HCT116 (cell line): ENCODE measurements at regions of chr4 and their contacts with region 1.

Region 1: DNA sequence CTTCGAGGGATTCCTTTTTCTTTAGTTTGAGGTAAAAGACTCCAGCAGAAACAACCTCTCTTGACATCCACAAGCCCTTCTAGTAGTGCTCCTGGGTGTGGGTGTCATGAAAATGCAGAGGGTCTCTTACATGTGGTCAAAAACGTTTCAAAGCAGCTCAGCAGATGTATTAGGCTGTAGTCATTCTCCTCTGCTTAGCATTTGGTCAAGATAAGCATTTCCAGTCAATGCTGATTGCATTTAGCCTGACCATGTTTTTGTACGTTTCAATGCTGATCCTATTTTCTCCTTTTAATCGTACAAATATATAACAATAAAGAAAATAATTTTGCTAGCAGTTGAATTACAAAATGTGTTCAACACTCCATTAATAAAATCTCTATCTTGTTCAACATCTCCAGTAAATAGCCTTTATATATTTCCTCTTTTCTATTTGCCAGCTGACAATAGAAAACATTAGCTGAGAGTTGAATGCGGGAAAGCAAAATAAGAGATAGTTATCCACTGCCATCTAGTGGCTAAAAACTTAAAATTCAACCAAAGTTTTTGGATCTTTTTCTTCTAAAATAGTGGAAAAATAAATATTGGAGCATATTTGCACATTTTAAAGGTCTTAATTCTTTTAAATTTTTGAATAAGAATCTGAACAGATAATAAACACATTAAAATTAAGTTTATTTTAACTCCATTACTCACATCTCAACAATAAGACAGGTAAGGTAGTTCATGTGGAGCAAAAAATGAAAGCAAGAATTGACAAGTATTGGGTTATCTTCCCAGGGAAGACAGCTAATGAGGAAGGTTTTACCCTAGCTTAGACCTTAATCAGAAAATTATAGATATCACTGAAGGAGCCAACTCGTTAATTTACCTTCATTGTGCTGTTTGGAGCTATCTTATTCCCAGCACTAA is 15.2 kb upstream of the PACRGL start:
- DNase-seq: no peak
- ATAC-seq: no peak
- H3K4me3 ChIP-seq: no peak overlapping the region
- H3K27ac ChIP-seq: no peak overlapping the region
- H3K4me1 ChIP-seq: no peaks in the 10 kb centered on the region
- H3K27me3 ChIP-seq: peaks cover 40% of the 10 kb centered on the region
- CTCF ChIP-seq: peak; percentile 31 to 65 (median 58); a peak in 4 of 6 replicates
- POLR2A ChIP-seq: no peak
- RAD21 ChIP-seq: peak; percentile 70

Region 2: DNA sequence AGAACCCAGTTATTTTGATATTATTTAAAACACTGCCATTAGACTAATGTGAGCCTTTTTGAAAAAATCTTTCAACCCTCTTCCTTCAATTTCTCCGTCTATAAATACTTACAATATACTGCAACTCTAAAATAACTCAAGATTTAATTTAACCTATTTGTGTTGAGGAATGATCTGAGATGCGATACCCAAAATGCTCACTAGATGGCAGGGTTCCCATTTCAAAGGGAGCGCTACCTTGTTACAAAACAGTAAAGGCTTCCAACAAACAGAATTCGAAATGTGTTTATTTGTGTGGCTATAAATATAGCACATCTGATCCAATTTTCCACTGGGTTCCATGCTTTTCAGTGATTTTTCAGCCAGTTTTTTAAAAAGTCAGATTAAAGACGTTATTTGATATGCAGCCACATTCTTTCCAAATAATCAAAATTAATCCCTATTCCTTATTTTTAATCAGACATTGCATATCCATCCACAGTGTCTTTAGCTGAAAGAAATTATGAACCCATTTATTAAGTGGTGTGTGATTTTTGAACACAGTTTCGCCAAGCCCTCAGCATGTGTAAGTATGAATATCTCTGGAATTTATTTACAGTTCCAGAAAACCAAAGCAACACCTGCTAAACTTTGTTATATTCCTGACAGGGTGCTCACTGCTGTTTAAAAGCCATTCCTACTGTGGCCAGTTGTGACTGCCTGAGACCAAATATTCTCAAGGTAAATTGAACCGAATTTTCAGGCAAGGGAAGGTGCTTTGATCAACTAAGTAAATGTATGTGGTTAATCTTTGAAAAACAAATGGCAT is 1995.6 kb before region 1 on chr4:
- CTCF ChIA-PET with region 1: no interaction called
- POLR2A ChIA-PET with region 1: no interaction called
- RAD21 ChIA-PET with region 1: no interaction called
- intact Hi-C with region 1: loop called (anchors 1 kb)
- DNase-seq: peak; percentile 44
- ATAC-seq: 0 out of 2 replicates have a peak, but pooled peaks have one; percentile 46
- H3K4me3 ChIP-seq: no peak overlapping the region
- H3K27ac ChIP-seq: no peak overlapping the region
- H3K4me1 ChIP-seq: no peaks in the 10 kb centered on the region
- H3K27me3 ChIP-seq: no peaks in the 10 kb centered on the region; the same call in 1 of the 2 replicates
- CTCF ChIP-seq: peak; percentile 59 to 87 (median 76)
- POLR2A ChIP-seq: no peak
- RAD21 ChIP-seq: peak; percentile 81

Region 3: GRCh38 chr4:20299515-20299914 is 385.6 kb before region 1 on chr4:
- CTCF ChIA-PET with region 1: no interaction called
- POLR2A ChIA-PET with region 1: no interaction called
- RAD21 ChIA-PET with region 1: no interaction called
- intact Hi-C with region 1: loop called (anchors 5 kb)
- DNase-seq: peak; percentile 13
- ATAC-seq: no peak
- H3K4me3 ChIP-seq: no peak overlapping the region
- H3K27ac ChIP-seq: no peak overlapping the region
- H3K4me1 ChIP-seq: no peaks in the 10 kb centered on the region
- H3K27me3 ChIP-seq: no peaks in the 10 kb centered on the region
- CTCF ChIP-seq: peak; percentile 12 to 51 (median 41); a peak in 4 of 6 replicates
- POLR2A ChIP-seq: no peak
- RAD21 ChIP-seq: peak; percentile 29

Region 4: DNA sequence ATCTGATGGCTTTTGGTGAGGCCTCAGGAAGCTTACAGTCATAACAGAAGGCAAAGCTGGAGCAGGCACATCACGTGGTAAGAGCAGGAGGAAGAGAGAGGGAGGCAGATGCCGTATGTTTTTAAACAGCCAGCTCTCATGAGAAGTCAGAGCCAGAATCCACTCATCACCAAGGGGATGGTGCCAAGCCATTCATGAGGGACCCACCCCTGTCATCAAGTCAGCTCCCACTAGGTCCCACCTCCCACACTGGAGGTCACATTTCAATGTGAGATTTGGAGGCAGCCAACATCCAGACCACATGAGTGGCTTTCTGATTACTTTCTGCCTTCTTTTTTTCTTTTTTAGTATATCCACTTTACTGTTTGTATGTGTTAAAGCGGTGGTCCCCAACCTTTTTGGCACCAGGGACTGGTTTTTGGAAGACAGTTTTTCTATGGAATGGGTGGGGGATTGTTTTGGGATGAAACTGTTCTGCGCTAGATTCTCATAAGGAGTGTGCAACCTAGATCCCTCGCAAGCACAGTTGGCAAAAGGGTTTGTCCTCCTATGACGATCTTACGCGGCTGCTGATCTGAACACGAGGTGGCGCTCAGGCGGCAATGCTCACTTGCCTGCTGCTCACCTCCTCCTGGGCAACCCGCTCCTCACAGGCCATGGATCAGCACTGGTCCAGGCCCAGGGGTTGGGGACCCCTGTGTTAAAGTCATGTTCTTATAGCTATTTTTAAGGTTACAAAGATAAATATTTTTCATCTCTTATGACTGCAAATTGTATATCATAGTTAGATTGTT is 371.7 kb before region 1 on chr4:
- CTCF ChIA-PET with region 1: interaction called, 3 read pairs
- POLR2A ChIA-PET with region 1: no interaction called
- RAD21 ChIA-PET with region 1: no interaction called
- intact Hi-C with region 1: loop called (anchors 5 kb)
- DNase-seq: peak; percentile 24
- ATAC-seq: peak; percentile 99
- H3K4me3 ChIP-seq: no peak overlapping the region
- H3K27ac ChIP-seq: no peak overlapping the region
- H3K4me1 ChIP-seq: no peaks in the 10 kb centered on the region
- H3K27me3 ChIP-seq: no peaks in the 10 kb centered on the region
- CTCF ChIP-seq: peak; percentile 35 to 76 (median 65); a peak in 5 of 6 replicates
- POLR2A ChIP-seq: no peak
- RAD21 ChIP-seq: peak; percentile 32; the same call in 1 of the 2 replicates

Region 5: DNA sequence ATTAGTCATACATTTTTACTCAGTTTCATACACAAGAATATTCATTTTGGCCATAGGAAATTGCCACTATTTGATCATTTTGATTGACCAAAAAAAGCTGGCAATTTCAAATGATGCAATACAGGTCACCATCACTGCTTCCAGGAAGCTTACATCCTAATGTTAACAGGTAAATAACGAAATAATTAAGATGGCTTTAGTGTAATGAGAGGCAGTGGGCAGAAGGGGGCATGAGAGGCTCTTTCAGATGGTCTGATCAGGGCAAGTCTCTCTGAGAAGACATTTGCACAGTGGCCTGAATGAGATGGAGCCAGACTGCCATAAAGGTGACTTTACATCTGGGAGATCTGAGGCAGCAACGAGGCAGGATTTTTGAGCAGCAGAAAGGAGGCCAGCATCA is 262.7 kb before region 1 on chr4:
- CTCF ChIA-PET with region 1: interaction called, 4 read pairs
- POLR2A ChIA-PET with region 1: no interaction called
- RAD21 ChIA-PET with region 1: no interaction called
- intact Hi-C with region 1: loop called (anchors 1 kb)
- DNase-seq: peak; percentile 47
- ATAC-seq: peak; percentile 90
- H3K4me3 ChIP-seq: no peak overlapping the region
- H3K27ac ChIP-seq: no peak overlapping the region
- H3K4me1 ChIP-seq: 0 out of 4 replicates have a peak, but pooled peaks cover 0 to 2% of the 10 kb centered on the region in 2 experiments
- H3K27me3 ChIP-seq: 0 out of 2 replicates have a peak, but pooled peaks cover 7% of the 10 kb centered on the region
- CTCF ChIP-seq: peak; percentile 38 to 55 (median 50); a peak in 5 of 6 replicates
- POLR2A ChIP-seq: no peak
- RAD21 ChIP-seq: peak; percentile 60

Region 6: GRCh38 chr4:20544645-20545044 is 140.5 kb before region 1 on chr4:
- CTCF ChIA-PET with region 1: interaction called, 4 read pairs
- POLR2A ChIA-PET with region 1: no interaction called
- RAD21 ChIA-PET with region 1: no interaction called
- intact Hi-C with region 1: loop called (anchors 10 kb)
- DNase-seq: peak; percentile 8
- ATAC-seq: peak; percentile 67; the same call in 1 of the 2 replicates
- H3K4me3 ChIP-seq: no peak overlapping the region
- H3K27ac ChIP-seq: no peak overlapping the region
- H3K4me1 ChIP-seq: no peaks in the 10 kb centered on the region
- H3K27me3 ChIP-seq: no peaks in the 10 kb centered on the region
- CTCF ChIP-seq: peak; percentile 43 to 54 (median 46); a peak in 4 of 6 replicates
- POLR2A ChIP-seq: no peak
- RAD21 ChIP-seq: peak; percentile 64